Naive thymus-derived CD4-positive, alpha-beta T cell (primary cell): ENCODE measurements at regions of chr3 and their contacts with region 1.

Region 1: GRCh38 chr3:157865352-157866000 is 240.7 kb downstream of the SHOX2 start:
- DNase-seq: peak in 5 of 9 donors; percentile 1 to 50 (median 3)
- ATAC-seq: peak; percentile 48
- H3K4me3 ChIP-seq: no peak overlapping the region
- H3K4me3 Mint-ChIP-seq: no peak overlapping the region
- H3K27ac ChIP-seq: no peak overlapping the region
- H3K27ac Mint-ChIP-seq: no peak overlapping the region
- H3K4me1 ChIP-seq: no peaks in the 10 kb centered on the region
- H3K4me1 Mint-ChIP-seq: no peaks in the 10 kb centered on the region
- H3K27me3 ChIP-seq: no peaks in the 10 kb centered on the region
- H3K27me3 Mint-ChIP-seq: peaks cover 0 to 5% (median 3%) of the 10 kb centered on the region in 5 donors

Region 2: DNA sequence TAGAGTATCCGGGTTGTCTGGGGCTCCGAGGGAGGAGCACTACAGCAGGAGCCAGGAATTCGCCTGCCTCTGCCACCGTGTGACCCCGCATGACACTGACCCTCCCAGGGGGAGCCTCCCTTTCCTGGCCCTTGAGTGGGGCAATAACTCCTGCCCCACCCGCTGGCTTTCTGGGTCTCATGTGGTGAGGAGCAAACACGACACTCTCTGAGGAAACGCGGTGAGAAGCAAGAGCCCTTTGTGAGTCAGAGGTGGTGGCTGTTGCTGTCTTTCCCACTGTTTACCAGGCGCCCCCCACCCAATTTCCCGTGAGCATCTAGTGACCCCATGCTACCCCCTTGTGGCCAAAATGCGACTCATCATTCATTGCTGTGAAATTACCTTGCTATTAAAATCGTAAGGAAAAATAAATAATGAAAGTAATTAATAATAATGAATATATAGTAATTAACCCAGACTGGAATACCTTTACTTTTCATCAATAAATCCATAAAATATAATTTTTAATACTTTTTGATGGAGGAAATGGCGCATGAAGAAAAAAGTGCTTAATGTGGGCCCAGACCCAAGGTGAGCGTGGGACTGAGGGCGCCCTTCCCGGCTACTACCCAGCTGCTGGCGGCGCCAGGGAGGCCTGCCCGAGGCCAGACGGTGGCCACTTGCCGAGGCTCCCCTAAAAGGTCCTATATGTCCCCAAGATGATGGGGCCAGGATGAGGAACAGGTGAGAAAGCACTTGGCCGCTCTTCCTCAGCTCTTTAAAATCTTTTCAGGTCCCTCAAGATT is 734.8 kb before region 1 on chr3:
- CTCF ChIA-PET with region 1: no interaction called
- POLR2A ChIA-PET with region 1: no interaction called
- intact Hi-C with region 1: no loop called
- DNase-seq: peak; percentile 43 to 86 (median 80)
- ATAC-seq: peak; percentile 78
- H3K4me3 ChIP-seq: peak overlapping the region; percentile 35
- H3K4me3 Mint-ChIP-seq: peak overlapping the region; percentile 61 to 84 (median 74)
- H3K27ac ChIP-seq: peak overlapping the region; percentile 80
- H3K27ac Mint-ChIP-seq: peak overlapping the region; percentile 93 to 99 (median 97)
- H3K4me1 ChIP-seq: peaks cover 44 to 69% of the 10 kb centered on the region in 2 donors
- H3K4me1 Mint-ChIP-seq: peaks cover 34 to 89% (median 60%) of the 10 kb centered on the region in 7 donors
- H3K27me3 ChIP-seq: no peaks in the 10 kb centered on the region
- H3K27me3 Mint-ChIP-seq: no peaks in the 10 kb centered on the region

Region 3: GRCh38 chr3:158313338-158313927 is 448.0 kb after region 1 on chr3:
- CTCF ChIA-PET with region 1: no interaction called
- POLR2A ChIA-PET with region 1: no interaction called
- intact Hi-C with region 1: loop called in 1 of 2 experiments (anchors 1 kb)
- DNase-seq: peak in 1 of 9 donors; percentile 2
- ATAC-seq: peak; percentile 44
- H3K4me3 ChIP-seq: no peak overlapping the region
- H3K4me3 Mint-ChIP-seq: no peak overlapping the region
- H3K27ac ChIP-seq: no peak overlapping the region
- H3K27ac Mint-ChIP-seq: no peak overlapping the region
- H3K4me1 ChIP-seq: no peaks in the 10 kb centered on the region
- H3K4me1 Mint-ChIP-seq: no peaks in the 10 kb centered on the region
- H3K27me3 ChIP-seq: no peaks in the 10 kb centered on the region
- H3K27me3 Mint-ChIP-seq: no peaks in the 10 kb centered on the region

Region 4: GRCh38 chr3:158539414-158540014 is 674.0 kb after region 1 on chr3:
- CTCF ChIA-PET with region 1: no interaction called
- POLR2A ChIA-PET with region 1: no interaction called
- intact Hi-C with region 1: loop called in 1 of 2 experiments (anchors 10 kb)
- DNase-seq: peak in 7 of 9 donors; percentile 4 to 34 (median 18)
- ATAC-seq: peak; percentile 67
- H3K4me3 ChIP-seq: no peak overlapping the region
- H3K4me3 Mint-ChIP-seq: no peak overlapping the region
- H3K27ac ChIP-seq: no peak overlapping the region
- H3K27ac Mint-ChIP-seq: no peak overlapping the region
- H3K4me1 ChIP-seq: no peaks in the 10 kb centered on the region
- H3K4me1 Mint-ChIP-seq: no peaks in the 10 kb centered on the region
- H3K27me3 ChIP-seq: no peaks in the 10 kb centered on the region
- H3K27me3 Mint-ChIP-seq: no peaks in the 10 kb centered on the region